Left colon (tissue), 2 donors: ENCODE measurements at regions of chr12 and their contacts with region 1.

Region 1: DNA sequence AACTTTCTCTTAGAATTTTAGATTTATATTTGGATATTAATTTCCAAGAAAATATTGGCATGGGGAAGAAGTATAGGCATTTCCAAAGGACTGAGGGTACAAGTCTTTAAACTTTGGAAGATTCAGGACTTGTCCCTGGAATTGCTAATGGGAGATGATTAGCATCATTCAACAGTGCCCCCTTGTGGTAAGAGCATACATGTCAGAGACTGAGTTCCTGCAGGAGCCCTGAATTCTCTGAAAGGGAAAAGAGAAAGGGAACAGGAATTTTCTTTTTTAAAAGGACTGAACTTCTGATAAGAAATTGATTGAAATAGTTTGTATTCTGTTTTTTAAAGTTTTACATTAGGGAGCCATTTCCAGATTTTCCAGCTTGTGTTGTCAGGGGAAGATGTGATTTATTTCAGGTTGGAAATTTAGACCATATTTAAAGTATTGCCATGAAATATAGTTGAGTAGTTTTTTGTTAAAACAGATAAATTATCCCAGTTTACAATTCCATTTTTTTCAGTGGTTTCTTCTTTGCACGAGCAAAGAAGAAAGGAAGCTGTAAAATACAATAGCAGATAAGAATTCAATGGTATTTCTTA is 44.0 kb upstream of the REP15 start:
- DNase-seq: peak in 1 of 2 donors; percentile 9
- ATAC-seq: peak; percentile 75

Region 2: GRCh38 chr12:27434673-27435565 is 217.3 kb before region 1 on chr12:
- intact Hi-C with region 1: loop called in 1 of 2 experiments (anchors 5 kb)
- DNase-seq: no peak
- ATAC-seq: peak; percentile 48